ENCODE measurements at regions of chr5 and their contacts with region 1.

Region 1: DNA sequence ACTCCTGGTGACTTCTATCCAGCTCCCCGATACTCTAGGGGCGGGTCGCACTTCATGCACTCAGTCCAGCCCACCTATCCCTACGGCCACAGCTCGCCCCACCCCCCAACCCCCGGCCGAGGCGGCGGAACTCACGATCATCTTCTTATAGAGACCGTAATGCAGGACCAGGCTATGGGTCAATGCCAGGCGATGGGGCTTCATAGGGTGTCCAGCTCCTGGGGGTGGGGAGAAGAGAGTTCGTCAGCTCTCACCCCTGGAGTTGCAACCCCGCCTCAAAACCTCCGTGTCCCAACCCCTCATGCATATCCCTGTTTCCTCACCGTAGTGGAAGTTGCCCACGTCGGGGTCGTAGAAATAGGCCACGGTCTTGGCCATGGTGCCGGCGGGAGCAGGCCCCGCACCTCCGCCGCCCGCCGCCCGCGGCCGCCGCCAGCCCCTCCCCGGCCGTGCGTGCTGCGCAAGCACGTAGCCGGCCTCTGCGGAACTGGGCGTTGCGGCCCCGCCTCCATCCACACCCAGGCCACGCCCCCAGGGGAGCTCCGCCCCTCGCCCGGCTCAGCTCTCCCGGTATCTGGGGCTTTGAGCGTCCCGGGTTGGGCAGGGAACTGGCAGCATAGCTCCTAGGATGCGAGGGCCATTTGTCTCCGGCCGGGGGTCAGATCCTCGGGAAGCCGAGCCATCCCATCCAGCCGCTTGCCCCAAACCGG is at the starts of genes HDAC3 and RELL2:
- DNase-seq: peak; percentile 81
- ATAC-seq: peak; percentile 88
- H3K4me3 ChIP-seq: peak within 1 kb of the TSS; percentile 91 to 99 (median 99)
- H3K27ac ChIP-seq: peak within 1 kb of the TSS; percentile 75
- H3K4me1 ChIP-seq: peaks cover 30% of the 10 kb centered on the region
- H3K27me3 ChIP-seq: no peaks in the 10 kb centered on the region; a peak in 1 of 5 replicates
- CTCF ChIP-seq: no peak
- EP300 ChIP-seq: no peak
- POLR2A ChIP-seq: peak; percentile 67 to 90
- RAD21 ChIP-seq: peak; percentile 28; the same call in 1 of the 2 replicates
- total RNA-seq, gene HDAC3: 83.9 and 84.0 TPM in 2 replicates
- total RNA-seq, gene RELL2: 5.2 and 8.3 TPM in 2 replicates

Region 2: DNA sequence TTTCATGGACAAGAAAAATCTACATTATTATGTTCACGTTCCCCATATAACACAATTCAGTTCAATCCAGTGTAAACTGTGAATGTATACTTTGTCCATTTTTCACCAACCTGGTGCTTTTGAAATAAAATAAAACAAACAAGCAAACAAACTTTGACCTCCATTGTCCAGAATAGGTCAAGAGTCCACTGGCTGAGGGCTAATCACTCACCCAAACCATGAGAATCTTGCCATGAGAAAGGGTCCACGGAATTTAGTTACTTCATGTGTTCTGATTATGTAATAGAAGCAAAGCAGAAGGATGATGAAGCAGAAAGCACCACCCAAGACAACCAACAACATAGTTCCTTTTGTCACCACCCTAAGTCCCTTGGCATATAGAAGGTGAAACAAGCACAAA is 46.4 kb before region 1 on chr5:
- CTCF ChIA-PET with region 1: interaction called, 3 read pairs
- POLR2A ChIA-PET with region 1: interaction called, 14 read pairs
- in situ Hi-C with region 1: loop called (anchors 5 kb)
- intact Hi-C with region 1: loop called (anchors 1 kb)
- DNase-seq: peak; percentile 83
- ATAC-seq: peak; percentile 81
- H3K4me3 ChIP-seq: no peak overlapping the region; a peak in 1 of 6 replicates
- H3K27ac ChIP-seq: peak overlapping the region; percentile 84
- H3K4me1 ChIP-seq: peaks cover 43% of the 10 kb centered on the region
- H3K27me3 ChIP-seq: no peaks in the 10 kb centered on the region
- CTCF ChIP-seq: no peak
- EP300 ChIP-seq: peak in 1 of 2 experiments; percentile 80; a peak in 2 of 4 replicates
- POLR2A ChIP-seq: no peak
- RAD21 ChIP-seq: no peak

Region 3: DNA sequence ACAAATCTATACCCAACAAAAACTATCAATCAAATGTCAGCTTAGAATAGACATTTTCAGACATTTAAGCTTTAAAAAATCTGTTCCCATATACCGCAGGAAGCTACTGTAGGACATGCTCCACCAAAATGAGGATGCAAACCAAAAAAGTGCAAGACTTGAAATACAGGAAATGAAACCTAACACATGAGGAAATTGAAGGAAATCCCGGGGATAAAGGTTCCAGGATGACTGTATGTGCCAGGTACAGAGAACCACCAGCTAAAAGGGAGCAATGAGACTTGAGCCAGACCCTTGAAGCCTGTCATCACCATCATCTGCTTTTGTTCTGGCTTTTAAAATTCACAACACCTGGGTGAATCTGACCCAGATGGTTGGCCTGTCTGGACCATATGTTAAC is 39.2 kb before region 1 on chr5:
- CTCF ChIA-PET with region 1: no interaction called
- POLR2A ChIA-PET with region 1: interaction called, 14 read pairs
- in situ Hi-C with region 1: loop called (anchors 5 kb)
- intact Hi-C with region 1: loop called (anchors 1 kb)
- DNase-seq: no peak
- ATAC-seq: no peak
- H3K4me3 ChIP-seq: no peak overlapping the region
- H3K27ac ChIP-seq: no peak overlapping the region
- H3K4me1 ChIP-seq: peaks cover 35% of the 10 kb centered on the region
- H3K27me3 ChIP-seq: no peaks in the 10 kb centered on the region
- CTCF ChIP-seq: no peak
- EP300 ChIP-seq: no peak
- POLR2A ChIP-seq: no peak
- RAD21 ChIP-seq: no peak

Region 4: GRCh38 chr5:141608557-141608956 is 28.0 kb before region 1 on chr5:
- CTCF ChIA-PET with region 1: no interaction called
- POLR2A ChIA-PET with region 1: interaction called, 14 read pairs
- in situ Hi-C with region 1: no loop called
- intact Hi-C with region 1: no loop called
- DNase-seq: peak; percentile 83
- ATAC-seq: peak; percentile 97
- H3K4me3 ChIP-seq: peak overlapping the region; percentile 24 to 49 (median 43); a peak in 5 of 6 replicates
- H3K27ac ChIP-seq: peak overlapping the region; percentile 78
- H3K4me1 ChIP-seq: peaks cover 91% of the 10 kb centered on the region
- H3K27me3 ChIP-seq: no peaks in the 10 kb centered on the region
- CTCF ChIP-seq: no peak
- EP300 ChIP-seq: peak in 1 of 2 experiments; percentile 61; a peak in 2 of 4 replicates
- POLR2A ChIP-seq: no peak
- RAD21 ChIP-seq: no peak

Region 5: GRCh38 chr5:141618804-141619554 is 17.6 kb before region 1 on chr5 and contains the start of gene DIAPH1:
- CTCF ChIA-PET with region 1: interaction called, 6 read pairs
- POLR2A ChIA-PET with region 1: interaction called, 35 read pairs
- in situ Hi-C with region 1: no loop called
- intact Hi-C with region 1: no loop called
- DNase-seq: peak; percentile 92
- ATAC-seq: peak; percentile 94
- H3K4me3 ChIP-seq: peak within 1 kb of the TSS; percentile 84 to 95 (median 88)
- H3K27ac ChIP-seq: peak within 1 kb of the TSS; percentile 87
- H3K4me1 ChIP-seq: peaks cover 45% of the 10 kb centered on the region
- H3K27me3 ChIP-seq: no peaks in the 10 kb centered on the region
- CTCF ChIP-seq: peak; percentile 98
- EP300 ChIP-seq: peak; percentile 32 to 50; a peak in 2 of 4 replicates
- POLR2A ChIP-seq: peak; percentile 43 to 84
- RAD21 ChIP-seq: peak; percentile 99
- total RNA-seq, gene DIAPH1: 28.5 and 33.9 TPM in 2 replicates

Region 6: DNA sequence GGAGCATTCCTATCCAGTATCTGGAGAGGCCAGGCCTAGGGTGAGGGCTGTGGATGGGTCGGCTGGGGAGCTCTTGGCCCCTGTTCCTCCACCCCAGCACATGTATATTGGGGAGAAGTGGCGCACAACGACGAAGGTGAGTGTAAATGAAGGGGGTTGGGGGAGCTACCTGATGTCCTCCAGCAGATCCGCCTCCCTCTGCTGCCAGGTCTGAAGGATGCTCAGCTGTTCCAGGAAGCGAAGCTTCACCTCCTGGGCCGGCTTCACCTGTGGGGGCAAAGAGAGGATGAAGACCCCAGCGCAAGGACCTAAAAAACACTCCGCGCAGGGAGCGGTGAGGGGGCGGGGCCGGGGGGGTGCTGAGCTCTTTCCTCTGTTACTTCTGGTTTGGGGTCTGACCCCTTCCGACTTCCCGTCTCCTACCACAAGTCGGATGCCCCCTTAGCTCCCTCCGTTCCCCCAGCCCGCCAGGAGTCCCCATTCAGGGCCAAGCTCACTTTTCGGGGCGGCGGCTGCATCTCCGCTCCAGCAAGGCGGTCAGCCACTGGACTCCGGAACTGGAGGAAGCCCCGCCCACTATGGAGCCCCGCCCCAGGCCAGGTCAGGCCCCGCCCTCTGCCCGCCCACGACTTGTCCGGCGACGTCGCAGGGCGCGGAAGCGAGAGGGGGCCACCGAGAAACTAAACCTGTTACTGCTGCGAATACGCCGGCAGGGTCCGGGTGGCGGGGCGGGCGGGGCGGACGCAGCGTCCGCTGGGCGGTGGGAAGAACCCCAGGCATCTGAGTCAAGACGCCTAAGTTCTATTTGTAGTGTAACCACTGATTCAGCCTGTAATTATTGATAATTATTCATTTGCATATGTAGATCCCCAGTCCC is 14.5 kb after region 1 on chr5 and contains the start of gene FCHSD1:
- CTCF ChIA-PET with region 1: no interaction called
- POLR2A ChIA-PET with region 1: interaction called, 15 read pairs
- in situ Hi-C with region 1: no loop called
- intact Hi-C with region 1: no loop called
- DNase-seq: peak; percentile 63
- ATAC-seq: peak; percentile 90
- H3K4me3 ChIP-seq: peak within 1 kb of the TSS; percentile 79 to 86 (median 85)
- H3K27ac ChIP-seq: no peak within 1 kb of the TSS
- H3K4me1 ChIP-seq: peaks cover 17% of the 10 kb centered on the region
- H3K27me3 ChIP-seq: peaks cover 5 to 10% of the 10 kb centered on the region in 2 experiments; a peak in 4 of 5 replicates
- CTCF ChIP-seq: no peak; the same call in 1 of the 2 replicates
- EP300 ChIP-seq: no peak
- POLR2A ChIP-seq: peak in 1 of 2 experiments; percentile 87; a peak in 2 of 4 replicates
- RAD21 ChIP-seq: no peak
- total RNA-seq, gene FCHSD1: 3.6 and 5.5 TPM in 2 replicates

Region 7: DNA sequence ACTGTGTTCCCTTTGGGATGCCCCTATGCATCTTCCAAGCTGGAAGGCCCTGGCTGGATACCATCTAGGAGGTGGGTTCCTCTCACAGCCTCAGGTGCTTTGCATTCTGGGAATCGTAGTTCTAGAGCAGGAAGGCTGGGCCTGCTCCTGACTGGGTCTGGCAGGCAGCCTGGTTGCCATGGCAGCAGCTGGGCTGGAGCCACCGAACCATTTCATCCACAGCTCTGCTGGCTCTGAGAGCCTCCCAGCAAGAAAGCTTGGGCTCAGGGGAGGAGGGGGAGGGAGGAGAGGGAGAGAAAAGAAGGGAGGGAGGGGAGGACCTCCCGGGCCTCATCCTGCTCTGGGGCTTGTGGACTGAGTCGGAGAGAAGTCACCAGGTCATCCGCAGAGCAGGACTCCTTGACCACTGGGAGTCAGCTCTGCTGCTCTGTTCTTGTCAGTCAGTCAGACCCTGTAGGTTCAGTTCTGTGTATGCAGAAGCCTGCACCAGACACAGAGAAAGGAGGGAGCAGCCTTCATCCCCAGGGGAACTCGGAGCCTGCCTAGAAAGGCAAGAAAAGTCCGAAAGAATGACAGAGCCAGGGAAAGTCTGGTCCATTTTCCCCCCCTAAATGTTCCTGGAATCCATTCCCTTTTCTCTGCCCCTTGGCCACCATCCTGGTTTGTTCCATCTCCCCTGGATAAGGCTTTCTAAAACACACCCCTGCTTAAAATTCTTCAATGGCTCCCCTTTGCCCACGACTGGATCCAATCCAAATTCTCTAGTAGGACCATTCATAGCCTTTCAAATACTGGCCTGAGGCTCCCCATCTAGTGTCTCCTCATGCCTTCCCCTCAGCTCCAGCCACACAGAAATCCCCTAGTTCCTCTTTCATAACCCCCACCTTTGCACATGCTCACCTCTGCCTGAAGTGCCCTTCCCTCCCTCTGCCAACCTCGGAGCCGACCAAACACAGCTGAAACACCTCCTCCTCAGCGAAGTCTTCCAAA is 110.9 kb after region 1 on chr5:
- CTCF ChIA-PET with region 1: no interaction called
- POLR2A ChIA-PET with region 1: no interaction called
- in situ Hi-C with region 1: no loop called
- intact Hi-C with region 1: no loop called
- DNase-seq: no peak
- ATAC-seq: peak; percentile 33; the same call in 1 of the 3 replicates
- H3K4me3 ChIP-seq: no peak overlapping the region
- H3K27ac ChIP-seq: no peak overlapping the region
- H3K4me1 ChIP-seq: no peaks in the 10 kb centered on the region
- H3K27me3 ChIP-seq: peaks cover 0 to 3% of the 10 kb centered on the region in 2 experiments; a peak in 1 of 5 replicates
- CTCF ChIP-seq: no peak
- EP300 ChIP-seq: no peak
- POLR2A ChIP-seq: no peak
- RAD21 ChIP-seq: no peak

Measured in HepG2 (cell line).